CD8-positive, alpha-beta T cell (primary cell): ENCODE measurements at regions of chr14 and their contacts with region 1.

Region 1: DNA sequence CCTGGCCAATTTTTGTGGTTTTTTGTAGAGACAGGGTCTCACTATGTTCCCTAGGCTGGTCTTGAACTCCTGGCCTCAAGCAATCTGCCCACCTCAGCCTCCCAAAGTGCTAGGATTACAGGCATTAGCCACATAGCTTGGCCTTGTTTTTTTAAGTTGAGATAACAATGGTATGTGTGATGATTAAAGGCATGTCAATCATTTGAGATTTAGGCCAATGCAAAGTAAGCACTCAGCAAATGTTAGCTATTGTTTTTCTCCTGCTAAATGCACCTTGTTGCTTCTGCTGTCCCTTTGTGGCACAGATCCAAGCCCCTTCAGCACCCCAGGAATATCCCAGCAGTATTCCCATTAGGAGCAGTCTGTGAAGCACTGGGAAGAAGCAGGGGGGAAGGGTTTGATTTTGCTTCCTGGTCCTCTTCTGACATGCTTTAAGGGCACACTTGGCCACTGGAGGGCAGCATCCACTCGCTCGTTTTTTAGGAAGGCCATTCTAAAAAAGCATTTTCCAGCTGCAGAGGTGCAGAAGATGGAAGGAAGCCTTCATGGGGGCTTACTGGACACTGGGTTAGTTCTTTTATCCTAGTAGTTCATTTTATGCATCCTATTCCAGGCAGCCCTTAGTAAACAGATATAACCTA is 70.2 kb upstream of the ZFP36L1 start:
- DNase-seq: peak; percentile 38 to 79 (median 65)
- ATAC-seq: no peak
- H3K4me3 ChIP-seq: no peak overlapping the region
- H3K4me3 Mint-ChIP-seq: no peak overlapping the region
- H3K27ac ChIP-seq: no peak overlapping the region
- H3K27ac Mint-ChIP-seq: no peak overlapping the region
- H3K4me1 ChIP-seq: no peaks in the 10 kb centered on the region
- H3K4me1 Mint-ChIP-seq: no peaks in the 10 kb centered on the region
- H3K27me3 ChIP-seq: no peaks in the 10 kb centered on the region
- H3K27me3 Mint-ChIP-seq: no peaks in the 10 kb centered on the region
- CTCF ChIP-seq: peak; percentile 64

Region 2: DNA sequence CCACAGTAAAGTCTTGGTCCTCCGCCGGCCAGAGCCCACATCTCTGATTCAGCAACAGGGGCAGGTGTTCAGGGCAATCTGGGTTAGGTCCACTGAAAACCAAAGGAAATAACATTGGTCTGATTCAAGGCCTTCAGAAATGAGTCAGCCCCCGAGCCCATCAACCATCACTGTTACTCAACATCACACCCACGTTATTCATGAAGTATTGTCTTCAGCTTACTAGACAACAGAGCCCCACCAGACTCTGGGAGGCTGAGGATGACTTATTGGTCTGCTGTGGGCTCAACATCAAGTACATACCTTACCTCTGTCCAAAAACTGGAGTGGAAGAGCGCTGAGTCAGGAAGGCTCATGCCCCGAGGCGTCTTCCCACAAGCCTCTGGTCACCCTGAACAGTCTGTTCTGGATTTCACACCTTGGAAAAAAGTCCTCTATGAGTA is 167.7 kb before region 1 on chr14:
- CTCF ChIA-PET with region 1: no interaction called
- POLR2A ChIA-PET with region 1: no interaction called
- intact Hi-C with region 1: no loop called
- DNase-seq: peak in 3 of 9 experiments; percentile 30 to 53 (median 53)
- ATAC-seq: peak; percentile 52
- H3K4me3 ChIP-seq: no peak overlapping the region
- H3K4me3 Mint-ChIP-seq: no peak overlapping the region
- H3K27ac ChIP-seq: no peak overlapping the region
- H3K27ac Mint-ChIP-seq: peak overlapping the region; percentile 29
- H3K4me1 ChIP-seq: no peaks in the 10 kb centered on the region
- H3K4me1 Mint-ChIP-seq: peaks cover 22% of the 10 kb centered on the region
- H3K27me3 ChIP-seq: no peaks in the 10 kb centered on the region
- H3K27me3 Mint-ChIP-seq: no peaks in the 10 kb centered on the region
- CTCF ChIP-seq: no peak

Region 3: GRCh38 chr14:68874746-68875155 is 11.7 kb after region 1 on chr14:
- CTCF ChIA-PET with region 1: interaction called, 28 read pairs
- POLR2A ChIA-PET with region 1: no interaction called
- intact Hi-C with region 1: no loop called
- DNase-seq: no peak
- ATAC-seq: no peak
- H3K4me3 ChIP-seq: no peak overlapping the region
- H3K4me3 Mint-ChIP-seq: no peak overlapping the region
- H3K27ac ChIP-seq: no peak overlapping the region
- H3K27ac Mint-ChIP-seq: no peak overlapping the region
- H3K4me1 ChIP-seq: no peaks in the 10 kb centered on the region
- H3K4me1 Mint-ChIP-seq: no peaks in the 10 kb centered on the region
- H3K27me3 ChIP-seq: no peaks in the 10 kb centered on the region
- H3K27me3 Mint-ChIP-seq: no peaks in the 10 kb centered on the region
- CTCF ChIP-seq: no peak

Region 4: GRCh38 chr14:69090187-69090789 is 227.2 kb after region 1 on chr14:
- CTCF ChIA-PET with region 1: interaction called, 29 read pairs
- POLR2A ChIA-PET with region 1: no interaction called
- intact Hi-C with region 1: loop called (anchors 1 to 5 kb)
- DNase-seq: peak in 7 of 9 experiments; percentile 10 to 60 (median 37)
- ATAC-seq: peak; percentile 71
- H3K4me3 ChIP-seq: no peak overlapping the region
- H3K4me3 Mint-ChIP-seq: no peak overlapping the region
- H3K27ac ChIP-seq: no peak overlapping the region
- H3K27ac Mint-ChIP-seq: peak overlapping the region; percentile 22
- H3K4me1 ChIP-seq: no peaks in the 10 kb centered on the region
- H3K4me1 Mint-ChIP-seq: peaks cover 16% of the 10 kb centered on the region
- H3K27me3 ChIP-seq: no peaks in the 10 kb centered on the region
- H3K27me3 Mint-ChIP-seq: no peaks in the 10 kb centered on the region
- CTCF ChIP-seq: peak; percentile 56

Region 5: DNA sequence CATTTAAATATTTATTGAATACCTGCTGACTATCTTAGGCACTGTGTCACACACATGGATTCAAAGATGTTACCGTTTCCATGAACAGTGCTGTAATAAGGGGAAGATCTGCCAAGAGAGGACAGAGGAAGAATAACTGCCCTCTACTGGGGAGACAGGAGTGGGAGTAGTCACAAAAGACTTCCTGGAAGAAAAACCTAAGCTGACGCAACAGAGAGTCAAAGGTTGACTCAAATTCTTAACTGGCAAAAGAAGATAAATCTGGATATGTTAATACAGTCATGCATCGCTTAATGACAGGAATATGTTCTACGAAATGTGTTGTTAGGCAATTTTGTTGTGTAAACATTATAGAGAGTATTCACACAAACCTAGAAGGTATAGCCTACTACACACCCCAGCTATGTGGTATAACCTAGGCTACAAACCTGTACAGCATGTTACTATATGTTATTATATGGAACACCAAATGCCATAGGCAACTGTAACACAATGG is 238.3 kb after region 1 on chr14:
- CTCF ChIA-PET with region 1: interaction called, 42 read pairs
- POLR2A ChIA-PET with region 1: no interaction called
- intact Hi-C with region 1: no loop called
- DNase-seq: peak in 2 of 9 experiments; percentile 15 to 36
- ATAC-seq: peak; percentile 62
- H3K4me3 ChIP-seq: no peak overlapping the region
- H3K4me3 Mint-ChIP-seq: no peak overlapping the region
- H3K27ac ChIP-seq: no peak overlapping the region
- H3K27ac Mint-ChIP-seq: peak overlapping the region; percentile 0
- H3K4me1 ChIP-seq: no peaks in the 10 kb centered on the region
- H3K4me1 Mint-ChIP-seq: peaks cover 18% of the 10 kb centered on the region
- H3K27me3 ChIP-seq: no peaks in the 10 kb centered on the region
- H3K27me3 Mint-ChIP-seq: no peaks in the 10 kb centered on the region
- CTCF ChIP-seq: no peak

Region 6: GRCh38 chr14:69107407-69108003 is 244.4 kb after region 1 on chr14:
- CTCF ChIA-PET with region 1: interaction called, 42 read pairs
- POLR2A ChIA-PET with region 1: no interaction called
- intact Hi-C with region 1: loop called (anchors 1 kb)
- DNase-seq: peak in 5 of 9 experiments; percentile 20 to 66 (median 53)
- ATAC-seq: peak; percentile 62
- H3K4me3 ChIP-seq: no peak overlapping the region
- H3K4me3 Mint-ChIP-seq: no peak overlapping the region
- H3K27ac ChIP-seq: no peak overlapping the region
- H3K27ac Mint-ChIP-seq: no peak overlapping the region
- H3K4me1 ChIP-seq: no peaks in the 10 kb centered on the region
- H3K4me1 Mint-ChIP-seq: no peaks in the 10 kb centered on the region
- H3K27me3 ChIP-seq: no peaks in the 10 kb centered on the region
- H3K27me3 Mint-ChIP-seq: no peaks in the 10 kb centered on the region
- CTCF ChIP-seq: peak; percentile 36

Region 7: GRCh38 chr14:69460093-69460701 is 597.1 kb after region 1 on chr14:
- CTCF ChIA-PET with region 1: interaction called, 8 read pairs
- POLR2A ChIA-PET with region 1: no interaction called
- intact Hi-C with region 1: loop called (anchors 5 to 10 kb)
- DNase-seq: peak; percentile 7 to 70 (median 42)
- ATAC-seq: peak; percentile 73
- H3K4me3 ChIP-seq: no peak overlapping the region
- H3K4me3 Mint-ChIP-seq: no peak overlapping the region
- H3K27ac ChIP-seq: no peak overlapping the region
- H3K27ac Mint-ChIP-seq: no peak overlapping the region
- H3K4me1 ChIP-seq: no peaks in the 10 kb centered on the region
- H3K4me1 Mint-ChIP-seq: no peaks in the 10 kb centered on the region
- H3K27me3 ChIP-seq: no peaks in the 10 kb centered on the region
- H3K27me3 Mint-ChIP-seq: no peaks in the 10 kb centered on the region
- CTCF ChIP-seq: peak; percentile 72

Region 8: DNA sequence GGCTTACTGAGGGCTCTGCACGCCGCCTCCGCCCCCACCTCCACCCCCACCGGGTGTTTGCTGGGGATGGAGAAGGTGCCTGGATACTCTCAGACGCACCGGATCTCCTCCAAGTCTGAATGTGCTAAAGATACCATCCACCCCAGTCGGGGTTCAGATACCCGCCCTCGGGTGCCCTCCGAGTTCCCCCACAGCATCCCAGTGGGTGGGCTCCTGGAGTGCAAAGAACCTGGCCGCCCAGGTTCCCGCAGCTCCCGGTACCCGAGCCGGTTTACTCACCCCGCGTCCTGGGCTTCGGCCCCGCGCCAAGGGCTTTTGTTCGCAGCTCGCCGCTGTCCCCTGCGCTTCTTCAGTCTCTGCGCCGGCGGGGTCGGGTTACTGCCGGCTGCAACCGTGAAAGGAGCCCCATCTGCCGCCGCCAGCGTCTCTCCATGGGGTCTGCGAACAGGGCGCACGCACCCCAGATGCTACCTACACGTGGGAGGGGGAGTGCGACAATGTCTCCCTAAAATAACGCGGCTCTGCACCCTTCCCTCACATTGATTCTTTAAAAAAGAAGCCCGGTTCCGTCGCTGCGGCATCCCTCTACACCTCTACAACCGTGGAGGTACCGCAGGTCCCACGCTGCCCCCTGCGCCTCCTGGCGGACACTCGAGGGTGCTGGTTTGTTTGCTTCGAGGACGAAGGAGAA is 711.3 kb after region 1 on chr14 and contains the start of gene CCDC177:
- CTCF ChIA-PET with region 1: interaction called, 3 read pairs
- POLR2A ChIA-PET with region 1: interaction called, 3 read pairs
- intact Hi-C with region 1: loop called in 1 of 2 experiments (anchors 2 kb)
- DNase-seq: peak; percentile 48 to 85 (median 74)
- ATAC-seq: peak; percentile 85
- H3K4me3 ChIP-seq: peak within 1 kb of the TSS; percentile 38 to 61
- H3K4me3 Mint-ChIP-seq: peak within 1 kb of the TSS; percentile 83
- H3K27ac ChIP-seq: no peak within 1 kb of the TSS
- H3K27ac Mint-ChIP-seq: no peak within 1 kb of the TSS
- H3K4me1 ChIP-seq: peaks cover 19% of the 10 kb centered on the region
- H3K4me1 Mint-ChIP-seq: peaks cover 12% of the 10 kb centered on the region
- H3K27me3 ChIP-seq: peaks cover 15 to 18% of the 10 kb centered on the region in 2 experiments
- H3K27me3 Mint-ChIP-seq: peaks cover 39% of the 10 kb centered on the region
- CTCF ChIP-seq: peak; percentile 96
- total RNA-seq, gene CCDC177: not detected